Left cardiac atrium (tissue), 4 donors: ENCODE measurements at regions of chr21 and their contacts with region 1.

Region 1: GRCh38 chr21:35204850-35205541 is 155.9 kb upstream of the RUNX1 start:
- DNase-seq: peak; percentile 91
- ATAC-seq: peak; percentile 71 to 76

Region 2: GRCh38 chr21:35102488-35103371 is 102.3 kb before region 1 on chr21:
- intact Hi-C with region 1: loop called in 1 of 2 experiments (anchors 5 kb)
- DNase-seq: peak; percentile 41
- ATAC-seq: peak; percentile 31 to 32

Region 3: DNA sequence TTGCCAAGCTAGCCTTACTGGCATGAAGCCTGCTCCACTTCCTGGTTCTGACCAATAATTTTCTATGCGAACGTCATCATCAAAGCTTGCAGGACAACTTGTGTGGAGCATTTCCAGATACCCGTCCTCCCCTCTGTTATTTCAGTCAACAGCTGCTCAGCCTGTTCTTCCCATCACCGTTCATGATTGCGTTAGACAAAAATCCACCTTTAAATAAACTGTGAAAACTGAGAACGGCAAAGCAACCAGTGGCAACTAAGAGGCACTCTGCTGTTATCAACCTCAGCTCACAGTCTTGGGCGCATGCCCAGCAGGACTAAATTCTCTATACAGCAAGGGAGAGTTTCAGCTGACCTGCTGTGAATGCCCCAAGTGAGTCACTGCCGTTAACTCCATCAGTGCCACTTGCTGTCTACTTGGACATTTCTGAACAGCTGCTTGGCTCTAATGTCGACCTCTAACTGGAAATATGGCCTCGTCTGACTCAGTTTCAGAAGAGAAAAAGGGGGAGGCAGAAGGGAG is 51.5 kb after region 1 on chr21:
- intact Hi-C with region 1: loop called in 1 of 2 experiments (anchors 5 kb)
- DNase-seq: peak; percentile 94
- ATAC-seq: peak; percentile 95 to 98